ENCODE measurements at regions of chr2 and their contacts with region 1.

Region 1: DNA sequence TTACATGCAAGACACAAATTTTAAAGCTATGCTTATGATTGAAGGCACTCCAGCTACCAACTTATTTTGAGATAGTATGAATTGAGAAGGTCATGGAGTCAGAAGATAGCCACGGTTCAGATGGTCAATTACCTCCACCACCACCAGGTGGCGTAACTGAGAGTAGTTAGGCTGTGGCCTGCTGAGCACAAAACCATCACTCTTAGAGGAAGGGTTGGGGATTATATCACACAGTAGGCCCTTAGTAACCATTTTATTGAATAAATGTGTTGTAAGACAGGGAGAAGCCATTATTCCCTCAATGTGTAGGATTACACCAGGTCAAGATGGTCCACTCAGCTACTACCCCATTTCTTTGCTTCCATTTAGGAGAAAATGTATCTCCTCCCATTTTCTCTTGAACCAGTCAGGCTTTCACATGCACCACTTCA is 18.8 kb downstream of the KLHL41 start:
- DNase-seq: peak in 4 of 5 donors; percentile 33 to 66 (median 64)
- ATAC-seq: peak in 3 of 4 donors; percentile 71 to 88 (median 85)
- H3K4me3 ChIP-seq: no peak overlapping the region
- H3K27ac ChIP-seq: no peak overlapping the region
- H3K4me1 ChIP-seq: no peaks in the 10 kb centered on the region
- H3K27me3 ChIP-seq: no peaks in the 10 kb centered on the region
- CTCF ChIP-seq: peak; percentile 72 to 90 (median 86)
- POLR2A ChIP-seq: no peak

Region 2: GRCh38 chr2:168118733-168119514 is 1409.4 kb before region 1 on chr2:
- intact Hi-C with region 1: no loop called
- DNase-seq: peak in 2 of 5 donors; percentile 21 to 40
- ATAC-seq: peak; percentile 23 to 68 (median 52)
- H3K4me3 ChIP-seq: no peak overlapping the region
- H3K27ac ChIP-seq: peak overlapping the region in 7 of 12 donors; percentile 0 to 25 (median 16)
- H3K4me1 ChIP-seq: peaks cover 0 to 27% (median 13%) of the 10 kb centered on the region in 12 donors
- H3K27me3 ChIP-seq: no peaks in the 10 kb centered on the region
- CTCF ChIP-seq: peak; percentile 54 to 78 (median 68)
- POLR2A ChIP-seq: no peak

Region 3: DNA sequence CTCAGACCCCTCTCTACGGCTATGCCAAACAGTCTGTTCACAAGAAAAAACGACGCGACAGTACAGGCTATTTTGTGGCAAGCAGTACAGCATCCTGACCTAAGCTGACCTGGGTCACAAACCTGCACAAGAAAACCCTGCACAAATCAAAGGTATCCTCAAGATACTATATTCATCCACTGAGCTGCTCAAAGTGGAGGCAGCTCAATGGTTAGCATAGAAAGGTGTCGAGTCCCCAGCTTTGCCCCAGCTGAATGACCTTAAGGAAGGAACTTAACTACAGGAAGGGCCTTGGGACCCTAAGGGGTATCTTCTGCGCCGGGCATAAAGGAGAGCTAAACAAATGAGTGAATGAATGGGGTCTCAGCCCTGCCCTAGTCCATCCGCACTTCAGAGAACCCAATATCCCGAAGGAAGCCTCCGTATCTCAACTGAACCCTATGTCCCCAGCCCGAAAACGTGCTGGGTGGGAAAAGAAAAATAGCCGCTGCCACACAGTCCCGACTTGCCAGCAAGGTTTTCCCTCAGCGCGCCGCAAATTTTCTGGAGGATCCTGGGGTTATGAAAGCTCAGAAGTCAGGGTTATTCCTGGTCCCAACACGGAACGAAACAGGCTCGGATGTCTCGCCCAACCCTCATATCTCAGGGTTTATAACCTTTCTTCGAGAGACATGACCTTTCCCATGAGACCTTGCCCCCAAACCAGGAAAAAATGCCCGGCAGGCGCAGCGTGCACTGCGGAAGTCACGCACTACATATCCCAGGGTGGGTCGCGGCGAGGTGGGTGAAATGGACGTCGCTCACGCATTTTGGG is 45.1 kb after region 1 on chr2 and contains the start of gene FASTKD1:
- intact Hi-C with region 1: no loop called
- DNase-seq: peak; percentile 92 to 96 (median 94)
- ATAC-seq: peak; percentile 98 to 100 (median 99)
- H3K4me3 ChIP-seq: peak within 1 kb of the TSS; percentile 58 to 89 (median 74)
- H3K27ac ChIP-seq: peak within 1 kb of the TSS; percentile 63 to 92 (median 83)
- H3K4me1 ChIP-seq: peaks cover 0 to 17% (median 6%) of the 10 kb centered on the region in 12 donors
- H3K27me3 ChIP-seq: no peaks in the 10 kb centered on the region
- CTCF ChIP-seq: no peak
- POLR2A ChIP-seq: peak in 1 of 2 donors; percentile 57
- total RNA-seq, gene FASTKD1: 25.3 to 103 (median 69.4) TPM

Region 4: DNA sequence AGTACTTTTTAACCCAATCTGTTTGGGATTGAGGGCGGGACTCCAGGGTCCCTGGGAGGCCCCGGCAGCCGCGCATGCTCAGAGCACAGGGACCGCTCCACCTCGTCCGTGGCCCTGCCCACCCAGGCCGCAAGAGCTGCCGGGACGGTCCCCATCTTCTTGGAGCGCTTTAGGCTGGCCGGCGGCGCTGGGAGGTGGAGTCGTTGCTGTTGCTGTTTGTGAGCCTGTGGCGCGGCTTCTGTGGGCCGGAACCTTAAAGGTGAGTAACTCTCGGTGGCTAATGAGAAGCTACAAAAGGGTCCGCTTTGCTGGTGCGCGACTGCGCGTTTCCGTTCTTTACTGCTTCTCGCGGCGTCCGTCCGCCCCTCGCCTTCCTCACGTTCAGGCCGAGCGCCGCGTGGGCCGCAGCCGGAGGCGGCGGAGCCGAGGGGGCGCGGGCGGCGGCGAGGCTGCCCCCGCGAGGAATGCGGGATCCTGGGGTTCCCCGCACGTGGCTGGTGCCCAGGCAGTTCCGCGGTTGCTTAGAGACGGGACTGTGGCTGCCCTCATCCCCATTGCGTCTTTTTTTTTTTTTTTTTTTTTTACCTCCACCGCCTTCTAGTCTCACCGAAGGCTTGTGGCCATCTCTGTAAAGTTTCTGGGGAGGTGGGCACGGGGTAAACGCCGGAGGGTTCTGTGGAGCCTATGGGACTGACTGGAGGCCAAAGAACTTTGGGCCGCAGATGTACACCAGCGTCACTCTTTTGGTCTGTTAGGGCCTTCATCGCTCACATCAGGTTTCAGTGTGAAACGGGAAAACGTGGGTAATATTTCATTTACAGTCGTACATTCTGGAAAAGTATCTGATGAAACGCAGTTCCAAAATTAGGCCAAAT is 270.7 kb after region 1 on chr2 and contains the start of gene SSB:
- intact Hi-C with region 1: loop called in 2 of 10 experiments (anchors 10 kb)
- DNase-seq: peak; percentile 93 to 97 (median 96)
- ATAC-seq: peak; percentile 100
- H3K4me3 ChIP-seq: peak within 1 kb of the TSS; percentile 65 to 98 (median 84)
- H3K27ac ChIP-seq: peak within 1 kb of the TSS; percentile 74 to 91 (median 79)
- H3K4me1 ChIP-seq: peaks cover 0 to 31% (median 7%) of the 10 kb centered on the region in 12 donors
- H3K27me3 ChIP-seq: no peaks in the 10 kb centered on the region
- CTCF ChIP-seq: peak in 1 of 12 donors; percentile 17
- POLR2A ChIP-seq: peak in 1 of 2 donors; percentile 76
- total RNA-seq, gene SSB: 37.4 to 60.6 (median 53.9) TPM

Region 5: DNA sequence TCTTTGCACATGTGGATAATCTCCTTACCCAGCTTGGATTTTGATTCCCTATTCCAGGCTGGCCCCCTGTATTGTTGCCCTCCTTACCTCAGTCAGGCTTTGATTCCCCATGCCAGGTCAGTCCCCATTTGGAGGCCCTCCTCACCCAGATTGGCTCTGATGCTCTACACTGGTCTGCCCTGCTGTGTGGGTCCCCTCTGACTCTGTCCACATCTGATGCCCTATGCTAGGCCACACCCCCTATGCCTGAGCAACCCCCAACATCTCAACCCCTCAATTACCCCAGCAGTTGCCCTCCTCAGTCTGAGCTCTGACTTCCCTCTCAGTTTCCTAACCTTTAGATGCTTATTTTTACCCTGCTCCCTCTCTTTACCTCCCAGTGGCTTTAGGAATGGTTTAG is 388.3 kb after region 1 on chr2:
- intact Hi-C with region 1: loop called in 3 of 10 experiments (anchors 5 to 10 kb)
- DNase-seq: no peak
- ATAC-seq: no peak
- H3K4me3 ChIP-seq: no peak overlapping the region
- H3K27ac ChIP-seq: no peak overlapping the region
- H3K4me1 ChIP-seq: no peaks in the 10 kb centered on the region
- H3K27me3 ChIP-seq: no peaks in the 10 kb centered on the region
- CTCF ChIP-seq: no peak
- POLR2A ChIP-seq: no peak

Region 6: GRCh38 chr2:169928463-169928864 is 400.2 kb after region 1 on chr2:
- intact Hi-C with region 1: loop called in 2 of 10 experiments (anchors 10 kb)
- DNase-seq: no peak
- ATAC-seq: no peak
- H3K4me3 ChIP-seq: no peak overlapping the region
- H3K27ac ChIP-seq: no peak overlapping the region
- H3K4me1 ChIP-seq: no peaks in the 10 kb centered on the region
- H3K27me3 ChIP-seq: no peaks in the 10 kb centered on the region
- CTCF ChIP-seq: peak; percentile 61 to 82 (median 74)
- POLR2A ChIP-seq: no peak

Region 7: DNA sequence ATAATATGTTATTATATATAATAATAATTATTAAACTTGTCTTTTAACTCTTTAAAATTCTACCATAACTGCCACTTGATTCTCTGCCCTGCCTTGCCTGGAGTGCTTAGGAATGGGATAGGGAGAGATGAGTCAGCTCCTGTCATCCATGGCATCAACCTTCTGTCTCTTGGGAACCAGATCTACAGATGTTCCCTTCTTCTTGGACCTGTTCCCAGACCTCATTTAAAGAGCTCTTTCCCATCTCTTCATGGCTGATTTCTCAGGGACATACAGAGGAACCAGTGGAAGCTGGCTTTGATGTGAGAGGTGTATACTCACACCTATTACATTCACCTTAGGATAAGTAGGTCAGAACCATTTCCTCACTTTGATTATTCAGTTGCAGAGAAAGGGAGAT is 494.4 kb after region 1 on chr2:
- intact Hi-C with region 1: loop called in 1 of 10 experiments (anchors 5 kb)
- DNase-seq: no peak
- ATAC-seq: peak in 1 of 4 donors; percentile 53
- H3K4me3 ChIP-seq: no peak overlapping the region
- H3K27ac ChIP-seq: no peak overlapping the region
- H3K4me1 ChIP-seq: peaks cover 0 to 17% (median 11%) of the 10 kb centered on the region in 12 donors
- H3K27me3 ChIP-seq: no peaks in the 10 kb centered on the region
- CTCF ChIP-seq: no peak
- POLR2A ChIP-seq: no peak